Transverse colon (tissue), 4 donors: ENCODE measurements at regions of chr22 and their contacts with region 1.

Region 1: DNA sequence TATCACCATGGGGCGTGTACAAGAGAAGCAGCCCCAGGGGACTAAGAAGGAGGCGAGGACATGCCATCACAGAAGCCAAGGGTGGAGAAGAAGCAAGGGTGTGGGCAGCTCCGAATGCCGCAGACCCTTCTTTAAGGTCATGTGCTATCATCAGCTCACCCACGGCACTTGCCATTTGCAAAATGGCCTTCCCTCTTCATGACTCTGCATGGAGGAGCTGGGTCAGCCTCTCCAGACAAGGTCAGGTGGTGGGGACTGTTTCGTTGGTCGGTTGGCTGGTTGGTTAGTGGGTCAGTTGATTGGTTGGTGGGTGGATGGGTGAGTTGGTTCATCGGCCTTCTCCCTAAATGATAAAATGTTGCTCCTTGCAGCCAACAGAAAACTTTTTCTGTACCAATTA is 622.5 kb downstream of the TBC1D22A start:
- DNase-seq: no peak
- H3K4me3 ChIP-seq: no peak overlapping the region
- H3K27ac ChIP-seq: no peak overlapping the region
- H3K4me1 ChIP-seq: no peaks in the 10 kb centered on the region
- H3K27me3 ChIP-seq: no peaks in the 10 kb centered on the region
- CTCF ChIP-seq: no peak
- EP300 ChIP-seq: no peak
- POLR2A ChIP-seq: no peak

Region 2: GRCh38 chr22:47452184-47452583 is 67.2 kb after region 1 on chr22:
- in situ Hi-C with region 1: no loop called
- intact Hi-C with region 1: loop called (anchors 2 kb)
- DNase-seq: no peak
- H3K4me3 ChIP-seq: no peak overlapping the region
- H3K27ac ChIP-seq: no peak overlapping the region
- H3K4me1 ChIP-seq: no peaks in the 10 kb centered on the region
- H3K27me3 ChIP-seq: no peaks in the 10 kb centered on the region
- CTCF ChIP-seq: peak in 4 of 5 experiments; percentile 24 to 48 (median 43)
- EP300 ChIP-seq: no peak
- POLR2A ChIP-seq: no peak